A549 (cell line): ENCODE measurements at regions of chr17 and their contacts with region 1.

Region 1: GRCh38 chr17:40531051-40531991 is 29.9 kb upstream of the TNS4 start:
- DNase-seq: no peak
- ATAC-seq: no peak
- H3K4me3 ChIP-seq: no peak overlapping the region
- H3K27ac ChIP-seq: peak overlapping the region; percentile 95 to 99
- H3K4me1 ChIP-seq: peaks cover 57% of the 10 kb centered on the region
- CTCF ChIP-seq: no peak
- EP300 ChIP-seq: no peak
- POLR2A ChIP-seq: no peak
- RAD21 ChIP-seq: no peak

Region 2: DNA sequence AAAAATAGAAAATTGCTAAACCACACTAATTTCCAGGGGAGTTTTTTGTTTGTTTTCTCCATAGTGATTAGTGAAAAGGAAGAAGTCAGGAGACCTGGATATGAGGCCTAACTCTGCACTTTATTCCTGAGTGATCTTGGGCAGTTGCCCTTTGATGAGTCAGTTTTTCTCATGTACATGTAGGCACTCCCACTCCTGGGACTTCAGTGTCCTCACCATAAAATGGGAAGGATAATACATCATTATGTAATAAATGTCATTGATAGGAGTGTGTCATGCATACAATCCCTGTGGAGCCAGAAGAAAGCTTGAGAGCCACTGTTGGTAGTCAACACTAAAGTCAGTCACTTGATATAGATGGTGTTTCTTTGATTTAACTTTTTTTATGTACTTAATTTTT is 279.7 kb before region 1 on chr17:
- CTCF ChIA-PET with region 1: no interaction called
- POLR2A ChIA-PET with region 1: no interaction called
- DNase-seq: peak; percentile 58 to 64
- ATAC-seq: peak; percentile 77 to 83
- H3K4me3 ChIP-seq: no peak overlapping the region
- H3K27ac ChIP-seq: no peak overlapping the region
- H3K4me1 ChIP-seq: peaks cover 13% of the 10 kb centered on the region
- CTCF ChIP-seq: no peak
- EP300 ChIP-seq: no peak
- POLR2A ChIP-seq: no peak
- RAD21 ChIP-seq: no peak

Region 3: DNA sequence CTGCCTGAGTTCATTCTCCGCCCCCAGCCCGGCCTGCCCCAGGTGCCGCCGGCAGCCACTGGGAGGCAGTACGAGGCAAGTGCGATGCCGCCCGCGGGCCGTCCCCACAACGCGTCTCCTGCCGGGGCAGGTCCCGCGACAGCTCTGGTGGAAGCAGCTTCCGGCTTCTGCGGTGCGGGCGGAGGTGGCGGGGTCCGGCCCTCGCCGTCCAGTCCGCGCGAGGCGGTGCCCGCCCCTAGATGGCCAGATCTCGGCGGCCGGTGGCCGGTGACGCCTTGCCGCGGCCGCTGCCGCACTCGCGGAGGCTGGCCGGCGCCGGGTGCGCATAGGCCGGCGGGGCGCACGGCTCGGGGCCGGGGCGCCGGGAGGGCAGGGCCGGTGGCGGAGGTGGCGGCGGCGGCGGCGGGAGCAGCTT is 168.6 kb before region 1 on chr17:
- CTCF ChIA-PET with region 1: interaction called, 125 read pairs
- POLR2A ChIA-PET with region 1: interaction called, 12 read pairs
- DNase-seq: peak; percentile 93 to 97
- ATAC-seq: peak; percentile 83 to 86
- H3K4me3 ChIP-seq: peak overlapping the region; percentile 61
- H3K27ac ChIP-seq: peak overlapping the region; percentile 84 to 95
- H3K4me1 ChIP-seq: peaks cover 30% of the 10 kb centered on the region
- CTCF ChIP-seq: peak; percentile 85
- EP300 ChIP-seq: no peak
- POLR2A ChIP-seq: peak; percentile 74
- RAD21 ChIP-seq: peak; percentile 73 to 85

Region 4: GRCh38 chr17:40417609-40418427 is 113.5 kb before region 1 on chr17 and contains the start of gene TOP2A:
- CTCF ChIA-PET with region 1: interaction called, 105 read pairs
- POLR2A ChIA-PET with region 1: interaction called, 10 read pairs
- DNase-seq: peak; percentile 100
- ATAC-seq: peak; percentile 95 to 96
- H3K4me3 ChIP-seq: peak within 1 kb of the TSS; percentile 68
- H3K27ac ChIP-seq: peak within 1 kb of the TSS; percentile 79 to 92
- H3K4me1 ChIP-seq: peaks cover 39% of the 10 kb centered on the region
- CTCF ChIP-seq: no peak
- EP300 ChIP-seq: no peak
- POLR2A ChIP-seq: peak; percentile 62
- RAD21 ChIP-seq: no peak
- polyA plus RNA-seq, gene TOP2A: 273 and 416 TPM in 2 replicates

Region 5: DNA sequence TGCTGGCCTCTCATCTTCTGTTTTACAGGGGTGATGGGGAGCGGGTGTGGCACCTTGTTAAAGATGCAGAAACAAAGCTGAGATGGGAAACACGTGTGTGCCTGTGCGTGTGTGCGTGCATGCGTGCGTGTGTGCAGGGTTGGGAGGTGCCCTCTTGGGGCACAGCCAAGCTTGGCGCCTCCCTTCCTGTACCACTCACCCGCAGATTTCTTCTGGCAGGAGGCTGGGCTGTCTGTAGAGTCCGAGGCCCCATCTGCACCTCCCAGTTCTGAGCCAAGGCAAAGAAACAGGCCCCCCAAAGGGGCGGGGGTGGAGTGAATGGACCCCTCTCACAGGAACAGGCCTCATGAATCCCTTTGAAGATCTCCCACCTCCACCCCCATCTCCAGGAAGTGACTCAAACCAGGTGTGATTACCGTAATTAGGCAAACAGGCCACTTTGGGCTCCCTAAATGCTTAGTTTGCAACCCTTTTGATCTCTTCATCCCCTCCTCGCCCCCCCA is 50.8 kb before region 1 on chr17:
- CTCF ChIA-PET with region 1: interaction called, 379 read pairs
- POLR2A ChIA-PET with region 1: interaction called, 53 read pairs
- DNase-seq: peak; percentile 59 to 87
- ATAC-seq: peak; percentile 16 to 17
- H3K4me3 ChIP-seq: no peak overlapping the region
- H3K27ac ChIP-seq: peak overlapping the region; percentile 96 to 97
- H3K4me1 ChIP-seq: peaks cover 83% of the 10 kb centered on the region
- CTCF ChIP-seq: no peak
- EP300 ChIP-seq: peak; percentile 14 to 58; a peak in 1 of 5 replicates
- POLR2A ChIP-seq: no peak
- RAD21 ChIP-seq: no peak

Region 6: GRCh38 chr17:40510328-40510648 is 21.0 kb before region 1 on chr17:
- CTCF ChIA-PET with region 1: interaction called, 30 read pairs
- POLR2A ChIA-PET with region 1: no interaction called
- DNase-seq: peak; percentile 90 to 96
- ATAC-seq: peak; percentile 92 to 94
- H3K4me3 ChIP-seq: no peak overlapping the region
- H3K27ac ChIP-seq: peak overlapping the region; percentile 97 to 99
- H3K4me1 ChIP-seq: peaks cover 54% of the 10 kb centered on the region
- CTCF ChIP-seq: no peak
- EP300 ChIP-seq: peak; percentile 79 to 88; a peak in 3 of 5 replicates
- POLR2A ChIP-seq: no peak
- RAD21 ChIP-seq: peak in 1 of 2 experiments; percentile 25; a peak in 1 of 5 replicates